SK-N-SH (cell line): ENCODE measurements at regions of chr14 and their contacts with region 1.

Region 1: GRCh38 chr14:25132732-25133422 is 82.9 kb upstream of the STXBP6 start:
- DNase-seq: peak; percentile 61
- H3K4me3 ChIP-seq: peak overlapping the region in 1 of 2 experiments; percentile 18; a peak in 1 of 4 replicates
- H3K27ac ChIP-seq: no peak overlapping the region
- H3K4me1 ChIP-seq: no peaks in the 10 kb centered on the region
- H3K27me3 ChIP-seq: peaks cover 20% of the 10 kb centered on the region; the same call in 1 of the 2 replicates
- CTCF ChIP-seq: peak; percentile 78
- EP300 ChIP-seq: no peak
- RAD21 ChIP-seq: peak; percentile 55

Region 2: GRCh38 chr14:25014440-25014839 is 118.4 kb before region 1 on chr14:
- CTCF ChIA-PET with region 1: no interaction called
- POLR2A ChIA-PET with region 1: no interaction called
- DNase-seq: no peak
- H3K4me3 ChIP-seq: no peak overlapping the region
- H3K27ac ChIP-seq: no peak overlapping the region
- H3K4me1 ChIP-seq: no peaks in the 10 kb centered on the region
- H3K27me3 ChIP-seq: 0 out of 2 replicates have a peak, but pooled peaks cover 4% of the 10 kb centered on the region
- CTCF ChIP-seq: no peak
- EP300 ChIP-seq: no peak
- RAD21 ChIP-seq: no peak

Region 3: GRCh38 chr14:25113394-25113793 is 19.5 kb before region 1 on chr14:
- CTCF ChIA-PET with region 1: interaction called, 12 read pairs
- POLR2A ChIA-PET with region 1: no interaction called
- DNase-seq: no peak
- H3K4me3 ChIP-seq: no peak overlapping the region
- H3K27ac ChIP-seq: no peak overlapping the region
- H3K4me1 ChIP-seq: 0 out of 4 replicates have a peak, but pooled peaks cover 0 to 7% of the 10 kb centered on the region in 2 experiments
- H3K27me3 ChIP-seq: no peaks in the 10 kb centered on the region
- CTCF ChIP-seq: no peak
- EP300 ChIP-seq: no peak
- RAD21 ChIP-seq: no peak

Region 4: GRCh38 chr14:25121337-25122122 is 11.3 kb before region 1 on chr14:
- CTCF ChIA-PET with region 1: interaction called, 25 read pairs
- POLR2A ChIA-PET with region 1: no interaction called
- DNase-seq: no peak
- H3K4me3 ChIP-seq: no peak overlapping the region
- H3K27ac ChIP-seq: no peak overlapping the region
- H3K4me1 ChIP-seq: no peaks in the 10 kb centered on the region
- H3K27me3 ChIP-seq: no peaks in the 10 kb centered on the region
- CTCF ChIP-seq: no peak
- EP300 ChIP-seq: no peak
- RAD21 ChIP-seq: no peak

Region 5: DNA sequence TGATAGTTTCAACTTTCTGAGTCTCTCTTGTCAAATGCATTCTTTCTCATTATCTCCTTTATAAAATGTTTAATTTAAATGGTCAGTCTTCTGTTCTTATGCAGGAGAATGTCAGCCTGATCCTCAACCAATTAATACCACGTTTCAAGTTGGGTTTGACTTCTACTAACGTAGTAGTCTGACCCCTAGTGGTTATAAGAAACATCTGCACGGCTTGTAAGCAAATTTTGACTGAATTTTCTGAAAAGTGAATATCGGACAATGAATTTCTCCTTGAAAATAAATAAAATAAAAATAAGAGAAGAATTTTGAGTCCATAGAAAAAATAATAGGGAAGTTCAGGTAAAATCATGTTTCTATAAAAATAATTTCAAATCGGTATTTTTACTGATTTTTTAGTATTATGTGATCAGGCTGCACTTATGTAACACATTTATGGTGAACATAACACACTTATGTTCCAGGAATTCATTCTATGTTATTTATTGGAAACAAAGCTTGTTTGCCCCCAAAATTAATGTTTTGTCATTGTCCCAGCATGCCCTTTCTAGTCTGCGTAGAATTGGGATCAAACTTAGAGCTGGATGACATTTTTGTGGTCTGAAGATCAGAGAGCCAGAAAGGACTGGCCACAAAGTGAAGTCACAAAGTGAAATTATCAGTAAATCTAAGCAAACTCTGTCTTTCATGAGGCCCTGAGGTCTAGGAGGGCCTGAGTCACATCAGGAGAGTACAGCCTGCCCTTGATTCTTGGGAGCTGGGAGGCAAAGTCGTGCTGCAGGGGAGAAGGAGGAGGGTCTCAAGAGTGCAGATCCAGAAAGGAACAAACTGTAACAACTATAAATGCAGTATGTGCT is 18.3 kb after region 1 on chr14:
- CTCF ChIA-PET with region 1: interaction called, 26 read pairs
- POLR2A ChIA-PET with region 1: no interaction called
- DNase-seq: peak; percentile 33
- H3K4me3 ChIP-seq: no peak overlapping the region; a peak in 1 of 4 replicates
- H3K27ac ChIP-seq: no peak overlapping the region
- H3K4me1 ChIP-seq: no peaks in the 10 kb centered on the region
- H3K27me3 ChIP-seq: 0 out of 2 replicates have a peak, but pooled peaks cover 5% of the 10 kb centered on the region
- CTCF ChIP-seq: peak; percentile 88
- EP300 ChIP-seq: no peak
- RAD21 ChIP-seq: peak; percentile 56